Thyroid gland (tissue), 4 donors: ENCODE measurements at regions of chr17 and their contacts with region 1.

Region 1: DNA sequence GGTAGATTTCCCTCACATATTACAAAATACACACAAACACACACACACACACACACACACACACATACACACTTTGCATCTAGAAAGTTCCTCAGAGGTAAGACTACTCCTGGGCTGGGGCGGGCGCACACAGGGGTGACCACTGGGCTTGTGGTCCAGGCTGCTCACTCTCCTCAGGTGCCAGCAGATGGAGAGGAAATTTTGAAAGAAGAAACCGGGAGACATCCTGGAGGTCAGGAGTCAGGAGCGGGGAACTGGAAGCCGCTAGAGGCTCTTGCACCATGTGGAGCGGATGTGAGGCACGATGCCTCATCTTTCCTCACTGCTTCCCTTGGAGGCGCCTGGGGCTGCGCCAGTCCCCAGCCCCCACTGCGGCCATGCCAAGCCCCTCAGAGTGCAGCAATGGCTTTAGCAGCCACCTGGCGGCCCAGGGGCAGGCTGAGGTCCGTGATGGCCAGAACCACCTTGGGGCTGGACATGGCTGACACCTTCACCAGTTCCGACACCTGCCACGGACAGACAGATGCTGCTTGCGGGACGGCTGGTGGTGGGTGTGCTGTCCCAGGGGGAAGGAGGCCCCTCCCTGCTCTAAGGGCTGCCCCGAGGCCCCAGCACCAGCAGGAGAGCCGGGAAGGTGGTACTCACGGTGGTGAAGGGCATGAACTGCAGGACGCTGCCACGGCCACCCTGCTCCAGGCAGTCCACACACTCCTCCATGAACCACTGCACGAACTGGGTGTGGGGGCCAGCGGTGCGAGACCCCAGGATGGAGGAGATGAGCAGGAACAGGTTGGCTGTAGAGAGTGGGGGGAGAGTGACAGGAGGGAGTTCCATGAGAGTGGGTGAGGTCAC is 4.1 kb downstream of the CSF3 start:
- DNase-seq: no peak
- H3K4me3 ChIP-seq: no peak overlapping the region
- H3K27ac ChIP-seq: no peak overlapping the region
- H3K4me1 ChIP-seq: peaks cover 37 to 57% of the 10 kb centered on the region in 2 donors
- H3K27me3 ChIP-seq: no peaks in the 10 kb centered on the region
- CTCF ChIP-seq: no peak
- POLR2A ChIP-seq: no peak

Region 2: DNA sequence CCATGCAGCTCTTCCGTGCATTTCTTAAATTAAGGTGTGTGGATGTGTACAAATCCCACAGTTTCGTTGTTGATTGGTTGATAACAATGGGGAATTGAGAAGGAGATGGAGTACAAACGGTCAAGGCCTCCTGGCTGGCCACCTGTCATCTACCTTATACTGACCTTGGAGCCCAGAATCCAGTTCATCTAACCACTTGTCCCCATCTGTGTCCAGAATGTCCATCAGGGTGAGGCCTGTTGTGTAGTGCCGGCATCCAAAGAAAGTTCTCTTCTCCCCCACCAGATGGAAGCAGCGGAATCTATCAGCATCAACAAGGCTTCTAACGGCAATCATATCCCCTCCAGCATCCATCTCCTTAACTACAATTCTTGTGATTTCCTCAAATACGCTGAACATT is 102.4 kb before region 1 on chr17:
- intact Hi-C with region 1: no loop called
- DNase-seq: no peak
- H3K4me3 ChIP-seq: no peak overlapping the region
- H3K27ac ChIP-seq: no peak overlapping the region
- H3K4me1 ChIP-seq: no peaks in the 10 kb centered on the region
- H3K27me3 ChIP-seq: no peaks in the 10 kb centered on the region
- CTCF ChIP-seq: no peak
- POLR2A ChIP-seq: no peak

Region 3: GRCh38 chr17:40086150-40087044 is 67.0 kb after region 1 on chr17:
- intact Hi-C with region 1: loop called (anchors 10 kb)
- DNase-seq: peak; percentile 63 to 67
- H3K4me3 ChIP-seq: no peak overlapping the region
- H3K27ac ChIP-seq: no peak overlapping the region
- H3K4me1 ChIP-seq: peaks cover 0 to 5% of the 10 kb centered on the region in 2 donors
- H3K27me3 ChIP-seq: no peaks in the 10 kb centered on the region
- CTCF ChIP-seq: peak; percentile 56 to 79 (median 72)
- POLR2A ChIP-seq: no peak